K562 (cell line): ENCODE measurements at regions of chr16 and their contacts with region 1.

Region 1: GRCh38 chr16:84555418-84556195 is 51.1 kb upstream of the MEAK7 start:
- DNase-seq: no peak
- ATAC-seq: peak; percentile 22; the same call in 1 of the 3 replicates
- H3K4me3 ChIP-seq: no peak overlapping the region
- H3K27ac ChIP-seq: no peak overlapping the region
- H3K4me1 ChIP-seq: peaks cover 0 to 4% of the 10 kb centered on the region in 2 experiments; a peak in 3 of 5 replicates
- H3K27me3 ChIP-seq: peaks cover 28 to 36% of the 10 kb centered on the region in 2 experiments
- CTCF ChIP-seq: 0 out of 6 replicates have a peak, but pooled peaks of 2 of the 3 experiments have one; percentile 3 to 11
- EP300 ChIP-seq: no peak
- POLR2A ChIP-seq: no peak
- RAD21 ChIP-seq: no peak

Region 2: DNA sequence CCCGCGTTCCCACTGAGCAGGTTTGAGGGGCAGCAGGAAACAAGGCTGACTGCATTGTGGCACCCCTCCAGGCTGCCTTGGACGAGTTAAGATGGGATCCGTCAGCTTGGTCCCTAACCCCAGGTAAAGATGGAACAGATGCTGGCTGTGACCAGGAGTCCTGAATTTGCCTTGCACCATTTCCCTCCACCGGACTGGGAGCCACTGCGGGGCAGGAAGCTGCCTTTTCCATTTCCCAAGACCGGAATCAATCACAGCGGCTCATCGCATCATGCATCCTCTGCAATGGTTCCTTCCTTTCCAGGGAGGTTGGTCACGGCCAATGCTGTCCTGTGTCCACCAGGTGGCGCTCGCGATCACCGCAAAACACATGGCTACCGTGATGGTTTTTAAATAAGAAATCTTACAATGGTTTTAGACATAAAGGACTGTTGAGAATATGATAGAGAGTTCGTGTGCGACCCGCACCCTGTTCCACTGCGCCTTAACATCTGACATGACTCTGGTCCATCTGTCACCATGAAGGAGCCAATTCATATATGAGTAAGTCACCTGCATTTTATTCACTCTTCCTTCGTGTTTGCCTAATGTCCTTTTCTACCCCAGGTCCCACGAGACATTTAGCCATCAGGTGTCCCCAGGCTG is 44.3 kb before region 1 on chr16:
- CTCF ChIA-PET with region 1: no interaction called
- POLR2A ChIA-PET with region 1: interaction called, 3 read pairs
- in situ Hi-C with region 1: no loop called
- intact Hi-C with region 1: loop called (anchors 5 kb)
- DNase-seq: peak; percentile 76 to 88 (median 80)
- ATAC-seq: peak; percentile 88
- H3K4me3 ChIP-seq: no peak overlapping the region
- H3K27ac ChIP-seq: no peak overlapping the region
- H3K4me1 ChIP-seq: peaks cover 7 to 16% of the 10 kb centered on the region in 2 experiments; a peak in 4 of 5 replicates
- H3K27me3 ChIP-seq: peaks cover 0 to 7% of the 10 kb centered on the region in 2 experiments; a peak in 1 of 5 replicates
- CTCF ChIP-seq: peak; percentile 89 to 99 (median 93)
- EP300 ChIP-seq: no peak
- POLR2A ChIP-seq: no peak
- RAD21 ChIP-seq: peak; percentile 97 to 99

Region 3: DNA sequence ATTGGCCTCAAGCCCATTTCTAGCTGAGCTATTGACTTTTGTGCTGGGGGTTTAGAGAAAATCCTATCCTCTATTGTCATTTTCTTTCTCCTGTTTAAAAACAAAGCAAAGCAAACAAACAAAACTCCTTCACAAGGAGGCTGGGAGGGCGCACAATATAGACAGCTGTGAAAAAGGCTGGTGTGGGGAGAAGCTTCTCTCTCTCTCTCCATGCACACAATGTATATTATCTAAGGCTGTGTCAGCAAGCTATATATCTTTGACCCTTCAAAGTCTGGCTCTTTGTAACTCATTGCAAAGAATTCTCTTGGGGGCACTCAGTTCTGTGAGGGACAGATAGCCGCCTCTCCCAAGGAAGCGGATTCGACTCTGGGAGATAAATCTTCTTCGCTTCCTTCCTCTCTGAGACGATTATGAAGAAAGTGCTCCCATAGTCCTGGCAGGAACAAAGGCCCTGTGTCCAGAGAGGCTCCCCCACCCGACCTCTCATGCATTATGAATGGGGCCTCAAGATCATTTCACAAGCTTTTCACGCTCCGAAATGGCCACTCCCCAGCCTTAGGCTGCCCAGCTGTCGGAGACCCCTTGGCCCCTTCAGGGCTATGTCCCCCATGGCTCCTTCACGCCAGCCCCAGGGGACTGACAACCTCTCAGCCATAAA is 18.0 kb before region 1 on chr16:
- CTCF ChIA-PET with region 1: no interaction called
- POLR2A ChIA-PET with region 1: interaction called, 10 read pairs
- in situ Hi-C with region 1: no loop called
- intact Hi-C with region 1: no loop called
- DNase-seq: peak; percentile 48 to 93 (median 68)
- ATAC-seq: peak; percentile 81
- H3K4me3 ChIP-seq: peak overlapping the region; percentile 0; the same call in 1 of the 2 replicates
- H3K27ac ChIP-seq: peak overlapping the region; percentile 86
- H3K4me1 ChIP-seq: peaks cover 27 to 63% of the 10 kb centered on the region in 2 experiments
- H3K27me3 ChIP-seq: no peaks in the 10 kb centered on the region
- CTCF ChIP-seq: no peak
- EP300 ChIP-seq: peak; percentile 97
- POLR2A ChIP-seq: no peak
- RAD21 ChIP-seq: peak; percentile 14 to 21; a peak in 1 of 4 replicates

Region 4: GRCh38 chr16:84603140-84603816 is 47.7 kb after region 1 on chr16:
- CTCF ChIA-PET with region 1: no interaction called
- POLR2A ChIA-PET with region 1: no interaction called
- in situ Hi-C with region 1: no loop called
- intact Hi-C with region 1: no loop called
- DNase-seq: peak in 1 of 4 experiments; percentile 46
- ATAC-seq: no peak
- H3K4me3 ChIP-seq: no peak overlapping the region
- H3K27ac ChIP-seq: peak overlapping the region; percentile 18; the same call in 2 of the 3 replicates
- H3K4me1 ChIP-seq: peaks cover 63 to 66% of the 10 kb centered on the region in 2 experiments
- H3K27me3 ChIP-seq: no peaks in the 10 kb centered on the region
- CTCF ChIP-seq: 0 out of 6 replicates have a peak, but pooled peaks of 1 of the 3 experiments have one; percentile 2
- EP300 ChIP-seq: no peak
- POLR2A ChIP-seq: no peak
- RAD21 ChIP-seq: no peak